Tibial artery (tissue), 4 donors: ENCODE measurements at regions of chr11 and their contacts with region 1.

Region 1: GRCh38 chr11:65403607-65404121 is 17.2 kb downstream of the FRMD8 start:
- DNase-seq: no peak
- H3K4me3 ChIP-seq: no peak overlapping the region
- H3K27ac ChIP-seq: no peak overlapping the region
- H3K4me1 ChIP-seq: no peaks in the 10 kb centered on the region
- H3K27me3 ChIP-seq: no peaks in the 10 kb centered on the region
- CTCF ChIP-seq: no peak

Region 2: GRCh38 chr11:65251476-65251875 is 152.2 kb before region 1 on chr11:
- intact Hi-C with region 1: no loop called
- DNase-seq: no peak
- H3K4me3 ChIP-seq: no peak overlapping the region
- H3K27ac ChIP-seq: no peak overlapping the region
- H3K4me1 ChIP-seq: no peaks in the 10 kb centered on the region
- H3K27me3 ChIP-seq: no peaks in the 10 kb centered on the region
- CTCF ChIP-seq: no peak

Region 3: GRCh38 chr11:65391007-65391406 is 12.7 kb before region 1 on chr11:
- intact Hi-C with region 1: loop called (anchors 2 kb)
- DNase-seq: no peak
- H3K4me3 ChIP-seq: peak overlapping the region in 1 of 2 donors; percentile 11
- H3K27ac ChIP-seq: peak overlapping the region; percentile 50 to 64
- H3K4me1 ChIP-seq: peaks cover 0 to 66% (median 43%) of the 10 kb centered on the region in 4 donors
- H3K27me3 ChIP-seq: no peaks in the 10 kb centered on the region
- CTCF ChIP-seq: no peak

Region 4: GRCh38 chr11:65454696-65455456 is 51.2 kb after region 1 on chr11:
- intact Hi-C with region 1: no loop called
- DNase-seq: peak; percentile 91 to 96
- H3K4me3 ChIP-seq: peak overlapping the region; percentile 53 to 56
- H3K27ac ChIP-seq: peak overlapping the region; percentile 79 to 87
- H3K4me1 ChIP-seq: peaks cover 0 to 27% (median 15%) of the 10 kb centered on the region in 4 donors
- H3K27me3 ChIP-seq: no peaks in the 10 kb centered on the region
- CTCF ChIP-seq: no peak